Naive thymus-derived CD4-positive, alpha-beta T cell (primary cell): ENCODE measurements at regions of chr5 and their contacts with region 1.

Region 1: GRCh38 chr5:140284013-140284412 is 18.9 kb downstream of the PFDN1 start:
- DNase-seq: no peak
- ATAC-seq: no peak
- H3K4me3 ChIP-seq: no peak overlapping the region
- H3K4me3 Mint-ChIP-seq: no peak overlapping the region
- H3K27ac ChIP-seq: no peak overlapping the region
- H3K27ac Mint-ChIP-seq: no peak overlapping the region
- H3K4me1 ChIP-seq: no peaks in the 10 kb centered on the region
- H3K4me1 Mint-ChIP-seq: peaks cover 12 to 30% (median 24%) of the 10 kb centered on the region in 7 donors
- H3K27me3 ChIP-seq: no peaks in the 10 kb centered on the region
- H3K27me3 Mint-ChIP-seq: no peaks in the 10 kb centered on the region

Region 2: GRCh38 chr5:139774980-139775661 is 508.9 kb before region 1 on chr5:
- CTCF ChIA-PET with region 1: no interaction called
- POLR2A ChIA-PET with region 1: no interaction called
- intact Hi-C with region 1: no loop called
- DNase-seq: peak; percentile 55 to 85 (median 73)
- ATAC-seq: peak; percentile 94
- H3K4me3 ChIP-seq: no peak overlapping the region
- H3K4me3 Mint-ChIP-seq: peak overlapping the region in 5 of 10 donors; percentile 33 to 61 (median 41)
- H3K27ac ChIP-seq: no peak overlapping the region
- H3K27ac Mint-ChIP-seq: no peak overlapping the region
- H3K4me1 ChIP-seq: no peaks in the 10 kb centered on the region
- H3K4me1 Mint-ChIP-seq: peaks cover 0 to 9% (median 0%) of the 10 kb centered on the region in 7 donors
- H3K27me3 ChIP-seq: no peaks in the 10 kb centered on the region
- H3K27me3 Mint-ChIP-seq: peaks cover 0 to 39% (median 0%) of the 10 kb centered on the region in 5 donors

Region 3: DNA sequence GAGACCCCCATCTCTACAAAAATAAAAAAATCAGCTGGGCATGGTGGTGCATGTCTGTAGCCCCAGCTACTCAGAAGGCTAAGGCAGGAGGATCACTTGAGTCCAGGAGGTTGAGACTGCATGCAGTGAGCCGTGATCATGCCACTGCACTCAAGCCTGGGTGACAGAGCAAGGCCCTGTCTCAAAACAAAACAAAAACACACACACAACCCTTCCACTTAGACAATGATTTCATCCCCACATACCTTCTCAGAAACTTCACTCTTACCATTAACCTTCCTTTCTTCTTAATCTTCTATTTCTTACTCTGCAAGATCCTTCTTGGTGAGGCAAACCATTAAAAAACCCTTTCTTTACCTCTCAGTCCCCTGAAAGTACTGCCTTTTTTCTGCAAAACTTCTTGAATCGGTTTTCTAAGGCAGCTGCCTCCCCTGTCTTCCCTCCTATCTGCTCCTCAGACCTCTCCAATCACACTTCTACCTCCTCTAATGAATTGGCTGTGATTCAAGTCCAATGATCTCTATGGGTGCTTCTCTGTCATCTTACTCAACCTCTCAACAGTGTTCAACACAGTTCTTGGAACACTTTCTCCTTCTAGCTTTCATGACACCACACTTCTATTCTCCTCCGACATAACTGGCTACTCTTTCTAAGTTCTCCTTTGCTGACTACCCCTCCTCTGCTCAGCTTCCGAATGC is 28.4 kb before region 1 on chr5:
- CTCF ChIA-PET with region 1: no interaction called
- POLR2A ChIA-PET with region 1: no interaction called
- intact Hi-C with region 1: no loop called
- DNase-seq: no peak
- ATAC-seq: no peak
- H3K4me3 ChIP-seq: no peak overlapping the region
- H3K4me3 Mint-ChIP-seq: no peak overlapping the region
- H3K27ac ChIP-seq: no peak overlapping the region
- H3K27ac Mint-ChIP-seq: no peak overlapping the region
- H3K4me1 ChIP-seq: peaks cover 16 to 34% of the 10 kb centered on the region in 2 donors
- H3K4me1 Mint-ChIP-seq: peaks cover 18 to 55% (median 53%) of the 10 kb centered on the region in 7 donors
- H3K27me3 ChIP-seq: no peaks in the 10 kb centered on the region
- H3K27me3 Mint-ChIP-seq: no peaks in the 10 kb centered on the region

Region 4: DNA sequence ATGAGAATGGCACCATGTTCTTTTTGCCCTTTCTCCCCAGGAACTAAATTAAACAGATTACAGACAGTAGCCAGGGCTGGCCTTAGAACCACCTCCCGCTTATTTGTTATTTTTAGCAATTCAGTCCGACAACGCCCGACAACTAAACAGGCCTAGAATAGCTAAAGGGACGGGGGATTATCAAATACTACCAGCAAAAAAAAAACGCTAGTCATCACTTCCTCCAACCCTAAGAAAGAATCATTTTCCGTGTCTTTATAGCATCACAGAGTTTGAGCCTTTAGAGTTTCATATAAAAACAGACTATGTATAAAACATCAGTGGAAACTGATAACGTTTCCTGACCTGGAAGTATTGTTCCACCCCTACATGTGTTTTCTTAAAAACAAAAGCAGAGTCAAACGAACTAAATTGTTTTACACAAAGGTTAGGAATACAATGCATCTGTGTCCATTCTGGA is 16.4 kb before region 1 on chr5:
- CTCF ChIA-PET with region 1: no interaction called
- POLR2A ChIA-PET with region 1: interaction called, 3 read pairs
- intact Hi-C with region 1: loop called in 1 of 2 experiments (anchors 2 kb)
- DNase-seq: peak in 1 of 9 donors; percentile 3
- ATAC-seq: peak; percentile 24
- H3K4me3 ChIP-seq: no peak overlapping the region
- H3K4me3 Mint-ChIP-seq: peak overlapping the region; percentile 26 to 78 (median 64)
- H3K27ac ChIP-seq: peak overlapping the region; percentile 57
- H3K27ac Mint-ChIP-seq: peak overlapping the region; percentile 64 to 85 (median 76)
- H3K4me1 ChIP-seq: peaks cover 0 to 24% of the 10 kb centered on the region in 2 donors
- H3K4me1 Mint-ChIP-seq: peaks cover 25 to 51% (median 38%) of the 10 kb centered on the region in 7 donors
- H3K27me3 ChIP-seq: no peaks in the 10 kb centered on the region
- H3K27me3 Mint-ChIP-seq: no peaks in the 10 kb centered on the region